Activated CD4-positive, alpha-beta T cell treated with anti-CD3 and anti-CD28 coated beads, Interleukin-2, amount 10 ng/mL, durations not matched to agents 24 days and 14 days (primary cell): ENCODE measurements at regions of chr7 and their contacts with region 1.

Region 1: GRCh38 chr7:149497456-149498261 is at the start of gene ZNF746:
- DNase-seq: peak; percentile 95
- H3K4me3 Mint-ChIP-seq: peak within 1 kb of the TSS; percentile 97
- H3K27ac Mint-ChIP-seq: peak within 1 kb of the TSS; percentile 96
- H3K4me1 Mint-ChIP-seq: peaks cover 19% of the 10 kb centered on the region
- H3K27me3 Mint-ChIP-seq: peaks cover 2% of the 10 kb centered on the region
- total RNA-seq, gene ZNF746: 23.3 and 24.8 TPM in 2 replicates

Region 2: DNA sequence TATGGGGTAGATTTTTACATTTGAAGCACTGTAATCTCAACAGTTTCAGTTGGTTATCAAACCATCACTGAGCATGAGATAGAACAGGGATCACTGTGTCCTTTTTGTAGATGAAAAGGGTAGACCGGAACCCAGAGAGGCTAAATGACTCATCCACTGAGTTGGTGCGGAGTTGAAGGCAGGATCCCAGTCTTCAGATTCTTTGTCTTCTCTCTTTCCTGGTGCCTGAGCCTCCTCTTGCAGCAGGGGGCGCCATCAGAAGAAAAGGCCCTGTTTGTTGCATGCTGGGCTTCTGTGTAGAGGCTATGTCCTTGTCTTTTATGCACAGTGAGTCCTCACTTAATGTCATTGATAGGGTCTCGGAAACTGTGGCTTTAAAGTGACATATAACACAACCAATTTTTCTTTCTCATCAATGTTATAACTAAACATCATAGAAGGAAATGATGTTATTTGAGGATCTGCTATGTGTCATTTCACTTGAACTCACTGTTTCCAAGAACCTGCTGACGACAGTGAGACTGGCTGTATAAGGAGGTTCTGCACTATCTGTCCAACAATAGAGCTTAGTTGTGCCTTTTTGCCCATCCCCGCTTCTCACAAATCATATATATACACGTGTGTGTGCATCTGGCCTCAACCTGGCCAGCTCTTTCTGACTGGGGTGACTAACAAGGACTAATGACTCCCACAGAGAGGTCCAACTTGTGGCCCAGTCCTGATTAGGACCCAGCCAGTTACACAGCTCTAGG is 288.0 kb before region 1 on chr7:
- intact Hi-C with region 1: loop called (anchors 1 kb)
- DNase-seq: peak; percentile 92
- H3K4me3 Mint-ChIP-seq: peak overlapping the region; percentile 49
- H3K27ac Mint-ChIP-seq: peak overlapping the region; percentile 93
- H3K4me1 Mint-ChIP-seq: peaks cover 16% of the 10 kb centered on the region
- H3K27me3 Mint-ChIP-seq: no peaks in the 10 kb centered on the region

Region 3: GRCh38 chr7:149422129-149422913 is 75.3 kb before region 1 on chr7:
- intact Hi-C with region 1: loop called (anchors 1 kb)
- DNase-seq: peak; percentile 94
- H3K4me3 Mint-ChIP-seq: peak overlapping the region; percentile 79
- H3K27ac Mint-ChIP-seq: peak overlapping the region; percentile 66
- H3K4me1 Mint-ChIP-seq: peaks cover 5% of the 10 kb centered on the region
- H3K27me3 Mint-ChIP-seq: peaks cover 6% of the 10 kb centered on the region

Region 4: DNA sequence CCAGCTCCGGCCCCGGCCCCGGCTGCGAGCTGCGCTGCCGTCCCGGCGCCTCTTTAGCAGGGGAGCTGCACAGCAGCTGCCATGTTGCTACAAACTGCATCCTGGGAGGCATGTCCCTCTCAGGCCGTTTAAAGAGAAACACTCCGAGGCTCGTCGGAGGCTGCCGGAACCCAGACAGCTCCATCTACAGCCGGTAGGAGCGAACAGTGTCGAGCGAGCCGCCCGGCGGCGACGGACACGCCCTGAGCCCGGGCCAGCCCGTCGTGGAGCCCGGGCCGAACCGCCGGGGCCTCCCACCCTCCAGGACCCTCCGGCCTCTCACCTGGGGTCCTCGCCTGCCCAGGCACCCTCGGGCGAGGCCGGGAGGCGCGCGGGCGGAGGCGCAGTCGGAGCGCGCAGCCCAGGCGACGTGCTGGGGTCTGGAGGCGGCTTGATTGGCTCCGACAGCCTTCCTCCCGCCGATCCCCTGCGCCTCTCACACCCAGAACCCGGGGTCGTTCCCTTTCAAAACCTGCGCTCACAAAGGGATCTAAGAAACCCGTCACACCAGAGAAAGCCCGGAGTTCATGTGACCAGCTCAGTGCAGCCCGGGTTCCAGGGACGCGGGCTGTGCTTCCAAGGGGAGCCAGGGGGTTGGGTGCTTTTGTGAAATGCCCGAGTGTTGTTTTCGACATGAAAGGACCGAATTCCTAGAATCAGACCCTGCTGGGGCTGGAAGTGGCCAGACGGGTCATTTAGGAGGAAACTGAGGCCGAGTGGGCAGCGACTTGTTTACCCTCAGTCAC is 37.0 kb before region 1 on chr7 and contains the start of gene ZNF777:
- intact Hi-C with region 1: loop called (anchors 2 kb)
- DNase-seq: peak; percentile 95
- H3K4me3 Mint-ChIP-seq: peak within 1 kb of the TSS; percentile 87
- H3K27ac Mint-ChIP-seq: peak within 1 kb of the TSS; percentile 79
- H3K4me1 Mint-ChIP-seq: peaks cover 21% of the 10 kb centered on the region
- H3K27me3 Mint-ChIP-seq: peaks cover 25% of the 10 kb centered on the region
- total RNA-seq, gene ZNF777: 18.2 and 19.2 TPM in 2 replicates